ENCODE measurements at regions of chr14 and their contacts with region 1.

Region 1: DNA sequence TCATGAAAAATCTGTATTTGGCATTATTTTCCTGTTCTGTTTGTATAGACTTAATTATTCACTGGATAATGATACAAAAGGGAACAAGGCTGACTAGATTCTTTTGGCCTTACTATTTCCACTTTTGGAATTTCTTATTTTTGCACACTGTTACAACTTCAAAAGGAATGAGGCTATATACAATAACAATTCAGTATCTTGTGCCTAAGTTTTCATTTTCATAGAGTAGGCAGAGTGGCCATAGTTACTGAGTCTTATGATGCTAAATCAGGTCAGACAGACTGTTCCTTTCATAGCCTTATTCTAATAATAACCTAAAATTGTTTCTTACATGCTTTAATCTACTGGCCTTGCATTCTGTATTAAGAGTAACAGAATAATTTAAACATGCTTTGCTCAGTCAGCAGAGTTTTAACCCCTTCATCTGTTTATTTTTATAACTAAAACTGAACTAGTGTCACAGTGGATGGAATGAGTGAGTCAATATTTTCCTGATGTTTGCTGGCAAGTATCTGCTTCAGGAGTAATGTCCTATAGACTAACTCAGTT is 10.5 kb downstream of the TTC8 start:
- DNase-seq: peak; percentile 26
- H3K4me3 Mint-ChIP-seq: no peak overlapping the region
- H3K27ac Mint-ChIP-seq: no peak overlapping the region
- H3K4me1 Mint-ChIP-seq: peaks cover 50% of the 10 kb centered on the region
- H3K27me3 Mint-ChIP-seq: no peaks in the 10 kb centered on the region
- CTCF ChIP-seq: no peak

Region 2: GRCh38 chr14:88824314-88825077 is 10.5 kb before region 1 on chr14 and contains the start of gene TTC8:
- CTCF ChIA-PET with region 1: interaction called, 4 read pairs
- POLR2A ChIA-PET with region 1: interaction called, 26 read pairs
- intact Hi-C with region 1: no loop called
- DNase-seq: peak; percentile 87
- H3K4me3 Mint-ChIP-seq: peak within 1 kb of the TSS; percentile 72
- H3K27ac Mint-ChIP-seq: peak within 1 kb of the TSS; percentile 100
- H3K4me1 Mint-ChIP-seq: peaks cover 8% of the 10 kb centered on the region
- H3K27me3 Mint-ChIP-seq: no peaks in the 10 kb centered on the region
- CTCF ChIP-seq: no peak
- total RNA-seq, gene TTC8: 20.9 and 23.9 TPM in 2 replicates

Region 3: GRCh38 chr14:88879022-88879421 is 44.1 kb after region 1 on chr14:
- CTCF ChIA-PET with region 1: no interaction called
- POLR2A ChIA-PET with region 1: no interaction called
- intact Hi-C with region 1: no loop called
- DNase-seq: peak; percentile 77
- H3K4me3 Mint-ChIP-seq: no peak overlapping the region
- H3K27ac Mint-ChIP-seq: peak overlapping the region; percentile 27
- H3K4me1 Mint-ChIP-seq: no peaks in the 10 kb centered on the region
- H3K27me3 Mint-ChIP-seq: no peaks in the 10 kb centered on the region
- CTCF ChIP-seq: no peak

Measured in MCF 10A (cell line).